Dorsolateral prefrontal cortex (tissue), 120 donors: ENCODE measurements at regions of chr19 and their contacts with region 1.

Region 1: DNA sequence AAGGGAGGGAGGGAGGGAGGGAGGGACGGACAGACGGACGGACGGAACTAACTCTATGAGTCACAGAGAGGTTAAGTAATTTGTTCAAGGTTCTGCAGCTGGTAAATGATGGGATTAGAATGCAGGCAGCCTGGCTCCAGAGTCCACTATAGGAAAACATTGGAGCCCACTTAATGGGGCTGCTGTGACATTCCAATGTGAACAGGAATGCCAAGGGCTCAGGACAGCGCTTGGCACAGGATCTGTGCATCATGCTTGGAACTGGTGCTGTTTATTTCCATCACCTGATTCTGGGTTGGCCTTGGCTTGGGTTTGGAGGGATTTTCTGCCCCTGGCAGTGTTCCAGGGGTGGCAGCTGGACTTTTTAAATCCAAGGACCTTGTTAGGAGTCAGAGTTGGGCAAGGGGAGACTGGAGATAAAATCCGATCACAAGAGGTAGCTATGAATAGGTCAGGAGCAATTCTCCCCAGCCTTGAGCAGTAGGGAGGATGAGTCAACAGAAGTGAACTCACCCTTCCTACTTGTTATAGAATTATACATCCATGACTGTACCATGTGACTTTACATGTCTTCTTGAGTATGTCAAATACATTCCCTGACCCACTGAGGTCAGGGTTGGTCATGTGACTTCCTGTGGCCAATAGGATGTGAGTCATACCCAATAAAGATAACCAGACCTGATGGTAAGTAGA is 7.8 kb upstream of the HIF3A start:
- DNase-seq: no peak
- H3K4me3 ChIP-seq: no peak overlapping the region
- H3K27ac ChIP-seq: no peak overlapping the region
- H3K27me3 ChIP-seq: no peaks in the 10 kb centered on the region
- CTCF ChIP-seq: no peak

Region 2: GRCh38 chr19:46346821-46347571 is 58.0 kb after region 1 on chr19 and contains the start of gene PPP5C:
- intact Hi-C with region 1: loop called in 1 of 2 experiments (anchors 10 kb)
- DNase-seq: peak; percentile 70 to 93 (median 84)
- H3K4me3 ChIP-seq: peak within 1 kb of the TSS; percentile 70 to 100 (median 96)
- H3K27ac ChIP-seq: peak within 1 kb of the TSS in 57 of 59 donors; percentile 30 to 95 (median 84)
- H3K27me3 ChIP-seq: no peaks in the 10 kb centered on the region
- CTCF ChIP-seq: peak in 51 of 56 donors; percentile 20 to 72 (median 48)
- total RNA-seq, gene PPP5C: 63.9 to 137 (median 98.8) TPM

Region 3: DNA sequence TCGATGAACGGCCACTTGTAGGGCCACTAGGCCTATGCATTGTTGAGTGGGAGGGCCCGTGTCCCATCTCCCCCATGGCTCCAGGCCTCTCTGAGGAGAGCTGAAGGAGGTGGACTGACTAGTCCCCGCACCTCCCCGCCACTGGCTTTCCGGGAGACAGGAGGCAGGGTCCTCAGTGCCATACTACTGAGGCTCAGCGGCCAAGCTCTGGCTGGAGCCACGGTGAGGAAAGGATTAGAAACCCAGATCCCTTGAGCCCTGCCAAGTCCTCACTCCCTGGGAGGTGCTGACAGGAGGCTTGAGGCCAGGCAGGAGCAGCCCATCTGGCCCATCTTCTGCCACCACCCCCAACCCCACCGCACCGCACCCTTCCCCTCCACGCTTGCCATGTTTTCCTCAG is 95.4 kb after region 1 on chr19:
- intact Hi-C with region 1: loop called in 1 of 2 experiments (anchors 10 kb)
- DNase-seq: peak in 2 of 10 donors; percentile 28
- H3K4me3 ChIP-seq: no peak overlapping the region
- H3K27ac ChIP-seq: no peak overlapping the region
- H3K27me3 ChIP-seq: no peaks in the 10 kb centered on the region
- CTCF ChIP-seq: no peak

Region 4: DNA sequence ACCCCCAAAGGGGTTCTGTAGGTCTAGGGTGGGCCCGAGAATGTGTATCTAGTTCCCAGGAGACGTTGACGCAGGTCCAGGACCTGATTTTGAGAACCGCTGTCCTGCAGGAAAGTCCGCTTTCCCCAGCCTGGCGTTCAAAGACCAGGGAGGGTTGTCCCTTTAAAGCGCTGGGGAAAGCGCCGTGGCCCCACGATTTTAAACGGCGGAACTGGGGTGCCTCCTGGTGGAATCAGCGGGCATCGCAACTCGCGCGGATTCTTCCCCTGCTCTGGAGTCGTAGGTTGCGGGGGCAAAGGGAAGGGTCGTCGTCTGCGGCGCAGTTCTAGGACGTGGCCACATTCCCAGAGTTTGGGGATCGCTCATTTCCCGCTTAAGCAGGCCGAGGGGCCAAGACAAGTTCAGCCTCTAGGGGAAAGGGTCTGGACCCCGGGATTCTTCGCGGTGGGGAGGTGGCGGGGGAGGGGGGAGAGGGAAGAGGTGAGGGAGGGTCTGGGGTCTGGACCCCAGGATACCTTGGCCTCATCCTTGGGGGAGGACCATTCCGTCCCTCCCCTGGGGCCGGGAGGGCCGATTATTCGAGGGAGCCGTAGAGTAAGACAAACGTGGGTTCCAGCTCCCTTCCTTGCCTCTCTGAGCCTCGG is 198.9 kb after region 1 on chr19:
- intact Hi-C with region 1: loop called (anchors 5 to 10 kb)
- DNase-seq: peak; percentile 71 to 90 (median 82)
- H3K4me3 ChIP-seq: peak overlapping the region; percentile 42 to 78 (median 62)
- H3K27ac ChIP-seq: peak overlapping the region in 42 of 59 donors; percentile 6 to 86 (median 60)
- H3K27me3 ChIP-seq: peaks cover 0 to 3% (median 0%) of the 10 kb centered on the region in 45 donors
- CTCF ChIP-seq: peak; percentile 74 to 99 (median 96)